Mammary epithelial cell (primary cell): ENCODE measurements at regions of chr17 and their contacts with region 1.

Region 1: DNA sequence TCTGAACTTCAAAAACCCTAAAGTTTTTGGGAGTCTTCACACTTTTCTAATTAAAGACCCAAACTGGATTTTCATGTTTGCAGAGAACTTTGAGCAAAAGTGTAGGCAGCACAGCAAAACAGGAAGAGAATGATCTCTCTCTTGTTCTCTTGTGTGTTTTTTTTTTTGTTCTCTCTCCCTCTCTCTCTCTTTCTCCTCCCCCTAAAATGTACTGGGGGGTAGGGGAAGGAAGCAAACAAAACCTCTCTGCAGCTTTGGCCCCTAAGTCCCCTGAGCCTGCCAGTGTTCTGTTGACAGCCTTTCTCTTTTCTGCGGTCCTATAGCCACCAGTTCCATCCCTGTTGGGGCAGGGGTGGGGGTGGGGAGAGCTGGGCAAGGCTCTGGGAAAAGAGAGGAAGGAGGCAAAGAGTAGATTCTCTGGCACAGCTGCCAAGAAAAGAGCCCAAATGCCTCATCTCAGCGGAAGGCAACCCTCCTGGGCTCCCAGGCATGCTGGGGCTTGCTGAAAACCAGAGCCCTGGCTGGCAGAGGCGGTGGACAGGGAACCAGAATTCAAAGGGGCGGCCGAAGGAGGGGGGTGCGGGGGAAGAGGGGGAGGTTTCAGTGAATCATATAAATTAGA is 295.3 kb downstream of the SOX9 start:
- DNase-seq: peak; percentile 96
- H3K4me3 ChIP-seq: no peak overlapping the region
- H3K27ac ChIP-seq: peak overlapping the region; percentile 79
- H3K4me1 ChIP-seq: peaks cover 51% of the 10 kb centered on the region
- H3K27me3 ChIP-seq: no peaks in the 10 kb centered on the region
- CTCF ChIP-seq: no peak

Region 2: GRCh38 chr17:72465191-72466024 is 49.2 kb after region 1 on chr17:
- CTCF ChIA-PET with region 1: no interaction called
- dilution Hi-C with region 1: loop called (anchors 5 kb)
- in situ Hi-C with region 1: no loop called
- intact Hi-C with region 1: loop called (anchors 2 kb)
- DNase-seq: peak; percentile 99
- H3K4me3 ChIP-seq: peak overlapping the region in 1 of 3 experiments; percentile 2
- H3K27ac ChIP-seq: peak overlapping the region; percentile 98
- H3K4me1 ChIP-seq: peaks cover 64% of the 10 kb centered on the region
- H3K27me3 ChIP-seq: no peaks in the 10 kb centered on the region
- CTCF ChIP-seq: no peak

Region 3: DNA sequence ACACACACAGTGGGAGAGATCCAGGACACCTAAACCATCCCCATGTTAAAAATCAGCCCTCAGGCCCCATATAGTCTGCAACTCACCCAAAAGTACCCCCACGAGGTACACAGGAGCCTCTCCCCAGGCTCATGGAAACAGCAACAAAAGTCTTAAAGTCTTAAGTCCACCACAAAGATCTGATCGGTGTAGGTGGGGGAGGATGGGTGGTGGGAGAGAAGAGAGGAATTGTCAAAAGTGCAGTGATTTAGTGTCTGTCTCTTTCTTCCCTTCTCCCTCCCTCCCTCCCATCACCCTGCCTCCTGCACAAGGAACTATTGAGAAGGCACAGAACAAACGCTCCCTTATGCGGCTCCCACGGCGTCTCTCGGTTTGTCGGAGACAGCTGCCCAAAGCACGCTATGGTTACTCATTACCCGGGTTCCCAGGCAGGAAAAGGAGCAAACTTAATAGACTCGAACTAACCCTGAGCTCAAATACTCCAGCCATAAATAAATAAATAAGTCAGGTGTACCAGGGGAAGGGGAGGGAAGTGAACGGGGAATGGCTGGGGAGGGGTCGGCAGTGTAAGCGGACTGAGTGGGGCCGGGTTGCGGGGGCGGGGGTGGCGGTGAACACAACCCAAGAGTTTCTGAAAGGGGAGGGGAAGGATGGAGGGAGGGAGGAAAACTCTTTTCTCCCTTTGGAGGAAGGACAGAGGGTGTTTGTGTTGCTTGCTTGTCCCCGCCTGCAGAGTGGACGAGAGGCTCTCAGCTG is 198.9 kb after region 1 on chr17:
- CTCF ChIA-PET with region 1: no interaction called
- dilution Hi-C with region 1: no loop called
- in situ Hi-C with region 1: no loop called
- intact Hi-C with region 1: no loop called
- DNase-seq: peak; percentile 94
- H3K4me3 ChIP-seq: no peak overlapping the region
- H3K27ac ChIP-seq: peak overlapping the region; percentile 97
- H3K4me1 ChIP-seq: peaks cover 32% of the 10 kb centered on the region
- H3K27me3 ChIP-seq: no peaks in the 10 kb centered on the region
- CTCF ChIP-seq: no peak